Left ventricle myocardium superior (tissue), 1 donor: ENCODE measurements at regions of chr12 and their contacts with region 1.

Region 1: GRCh38 chr12:21607701-21608100 is 3.1 kb upstream of the GYS2 start:
- DNase-seq: no peak
- ATAC-seq: peak; percentile 61

Region 2: GRCh38 chr12:21509768-21510167 is 97.9 kb before region 1 on chr12:
- intact Hi-C with region 1: no loop called
- DNase-seq: no peak
- ATAC-seq: no peak

Region 3: DNA sequence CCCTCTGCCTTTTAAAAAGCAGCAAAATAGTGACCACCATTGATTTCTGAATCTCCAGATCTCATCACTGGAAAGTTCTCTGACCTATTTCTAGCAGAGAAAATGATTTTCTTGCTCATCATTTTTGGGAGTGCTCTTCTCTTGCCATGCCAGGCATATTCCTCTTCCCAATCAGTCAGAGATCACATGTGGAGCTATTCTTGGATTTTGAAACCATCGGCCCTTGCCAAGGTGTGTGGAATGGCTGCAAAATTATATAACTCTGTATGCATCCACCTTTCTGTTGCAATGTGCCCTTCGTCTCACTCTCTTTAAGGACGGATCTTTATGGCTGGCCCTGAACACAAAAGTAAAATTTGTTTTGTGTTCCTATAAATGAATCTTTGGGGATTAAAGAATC is 75.4 kb after region 1 on chr12:
- intact Hi-C with region 1: loop called (anchors 5 kb)
- DNase-seq: no peak
- ATAC-seq: peak; percentile 84